ENCODE measurements at regions of chr10 and their contacts with region 1.

Region 1: DNA sequence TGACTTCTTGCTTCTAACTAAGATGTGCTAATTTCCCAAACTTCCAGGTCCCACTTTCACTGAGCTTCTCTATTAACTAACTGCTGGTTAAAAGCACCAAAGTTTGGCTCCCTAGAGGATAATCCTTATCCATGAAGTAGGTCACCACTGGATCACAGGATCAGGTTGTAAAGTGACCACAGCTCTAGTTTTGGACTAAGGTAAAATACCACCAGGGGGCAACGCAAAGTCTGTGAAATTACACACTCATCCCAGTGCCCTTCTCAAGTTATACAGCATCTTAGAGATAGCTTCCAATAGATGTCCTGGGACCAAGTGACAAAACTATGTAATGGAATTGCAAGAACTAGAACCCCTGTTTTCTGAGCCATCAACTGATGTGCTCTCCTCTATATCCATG is 116.4 kb upstream of the ASAH2 start:
- DNase-seq: peak; percentile 25 to 35 (median 31)
- H3K4me3 ChIP-seq: no peak overlapping the region
- H3K27ac ChIP-seq: no peak overlapping the region
- H3K4me1 ChIP-seq: peaks cover 0 to 5% (median 2%) of the 10 kb centered on the region in 4 experiments
- H3K27me3 ChIP-seq: no peaks in the 10 kb centered on the region

Region 2: GRCh38 chr10:50325449-50326171 is 42.1 kb before region 1 on chr10:
- CTCF ChIA-PET with region 1: interaction called, 10 read pairs
- POLR2A ChIA-PET with region 1: no interaction called
- DNase-seq: peak; percentile 45 to 86 (median 84)
- H3K4me3 ChIP-seq: peak overlapping the region in 2 of 7 experiments; percentile 31 to 47
- H3K27ac ChIP-seq: peak overlapping the region in 1 of 2 experiments; percentile 92
- H3K4me1 ChIP-seq: peaks cover 5 to 53% (median 34%) of the 10 kb centered on the region in 4 experiments
- H3K27me3 ChIP-seq: no peaks in the 10 kb centered on the region

Region 3: GRCh38 chr10:50417886-50418830 is 50.4 kb after region 1 on chr10:
- CTCF ChIA-PET with region 1: interaction called, 33 read pairs
- POLR2A ChIA-PET with region 1: no interaction called
- DNase-seq: peak; percentile 57 to 89 (median 84)
- H3K4me3 ChIP-seq: peak overlapping the region; percentile 68 to 85 (median 73)
- H3K27ac ChIP-seq: peak overlapping the region in 1 of 2 experiments; percentile 63
- H3K4me1 ChIP-seq: peaks cover 10 to 26% (median 13%) of the 10 kb centered on the region in 4 experiments
- H3K27me3 ChIP-seq: no peaks in the 10 kb centered on the region

Region 4: DNA sequence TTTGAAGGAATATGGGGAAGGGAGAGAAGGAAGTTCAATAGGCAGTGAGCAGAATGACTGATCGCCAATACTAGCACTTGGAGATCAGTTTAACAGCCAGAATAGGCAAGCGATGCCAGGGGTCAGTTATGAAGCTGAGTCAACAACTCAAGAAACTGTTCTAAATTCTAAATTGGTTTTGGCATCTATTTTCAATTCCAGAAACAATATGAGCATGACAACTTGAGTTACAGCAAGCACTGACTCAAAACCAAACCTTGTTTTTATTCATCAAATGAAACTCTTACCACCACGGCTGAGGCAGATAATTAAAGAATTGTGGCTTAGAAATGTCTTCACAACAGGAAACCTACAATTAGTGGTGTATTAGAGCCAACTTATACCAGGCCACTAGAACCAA is 64.1 kb after region 1 on chr10:
- CTCF ChIA-PET with region 1: no interaction called
- POLR2A ChIA-PET with region 1: no interaction called
- DNase-seq: no peak
- H3K4me3 ChIP-seq: no peak overlapping the region
- H3K27ac ChIP-seq: no peak overlapping the region
- H3K4me1 ChIP-seq: peaks cover 0 to 11% (median 8%) of the 10 kb centered on the region in 4 experiments
- H3K27me3 ChIP-seq: no peaks in the 10 kb centered on the region